Ovary (tissue), 10 donors: ENCODE measurements at regions of chr5 and their contacts with region 1.

Region 1: GRCh38 chr5:16934123-16934522 is 2.0 kb downstream of the MYO10 start:
- DNase-seq: peak; percentile 63 to 81 (median 74)
- H3K4me3 ChIP-seq: peak overlapping the region; percentile 56
- H3K27ac ChIP-seq: no peak overlapping the region
- H3K4me1 ChIP-seq: peaks cover 14% of the 10 kb centered on the region
- H3K27me3 ChIP-seq: no peaks in the 10 kb centered on the region
- CTCF ChIP-seq: peak; percentile 38 to 75 (median 57)
- EP300 ChIP-seq: no peak
- POLR2A ChIP-seq: no peak

Region 2: DNA sequence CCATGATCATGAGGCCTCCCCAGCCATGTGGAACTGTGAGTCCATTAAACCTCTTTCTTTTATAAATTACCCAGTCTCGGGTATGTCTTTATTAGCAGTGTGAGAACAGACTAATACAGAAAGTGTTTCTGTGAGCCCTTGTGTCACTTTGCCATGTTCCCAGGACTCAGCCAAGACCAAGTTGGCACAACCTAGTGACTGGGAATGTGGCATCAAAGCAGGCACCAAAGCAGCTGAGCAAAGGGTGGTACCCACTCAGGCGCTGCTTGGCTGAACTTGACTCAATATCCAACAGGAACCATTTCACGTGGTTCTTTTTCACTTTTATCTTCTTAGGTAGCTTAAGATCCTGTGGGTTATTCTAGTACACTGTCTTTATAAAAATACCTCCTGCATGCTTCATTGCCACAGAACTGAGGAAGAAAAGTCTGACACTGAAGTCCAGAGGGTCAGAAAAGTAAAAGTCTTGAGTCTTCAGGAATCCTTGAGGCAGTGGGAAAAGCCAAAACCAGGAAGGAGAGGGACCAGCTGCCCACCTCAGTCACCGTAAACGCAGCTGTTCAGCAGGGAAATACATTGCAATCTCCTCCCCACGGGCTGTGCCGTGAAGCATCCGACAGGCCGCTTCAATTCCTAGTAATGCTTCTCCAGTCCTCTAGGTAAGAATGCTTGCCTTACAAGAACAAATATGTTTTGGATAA is 226.8 kb before region 1 on chr5:
- intact Hi-C with region 1: no loop called
- DNase-seq: no peak
- H3K4me3 ChIP-seq: no peak overlapping the region
- H3K27ac ChIP-seq: no peak overlapping the region
- H3K4me1 ChIP-seq: no peaks in the 10 kb centered on the region
- H3K27me3 ChIP-seq: no peaks in the 10 kb centered on the region
- CTCF ChIP-seq: no peak
- EP300 ChIP-seq: no peak
- POLR2A ChIP-seq: no peak

Region 3: DNA sequence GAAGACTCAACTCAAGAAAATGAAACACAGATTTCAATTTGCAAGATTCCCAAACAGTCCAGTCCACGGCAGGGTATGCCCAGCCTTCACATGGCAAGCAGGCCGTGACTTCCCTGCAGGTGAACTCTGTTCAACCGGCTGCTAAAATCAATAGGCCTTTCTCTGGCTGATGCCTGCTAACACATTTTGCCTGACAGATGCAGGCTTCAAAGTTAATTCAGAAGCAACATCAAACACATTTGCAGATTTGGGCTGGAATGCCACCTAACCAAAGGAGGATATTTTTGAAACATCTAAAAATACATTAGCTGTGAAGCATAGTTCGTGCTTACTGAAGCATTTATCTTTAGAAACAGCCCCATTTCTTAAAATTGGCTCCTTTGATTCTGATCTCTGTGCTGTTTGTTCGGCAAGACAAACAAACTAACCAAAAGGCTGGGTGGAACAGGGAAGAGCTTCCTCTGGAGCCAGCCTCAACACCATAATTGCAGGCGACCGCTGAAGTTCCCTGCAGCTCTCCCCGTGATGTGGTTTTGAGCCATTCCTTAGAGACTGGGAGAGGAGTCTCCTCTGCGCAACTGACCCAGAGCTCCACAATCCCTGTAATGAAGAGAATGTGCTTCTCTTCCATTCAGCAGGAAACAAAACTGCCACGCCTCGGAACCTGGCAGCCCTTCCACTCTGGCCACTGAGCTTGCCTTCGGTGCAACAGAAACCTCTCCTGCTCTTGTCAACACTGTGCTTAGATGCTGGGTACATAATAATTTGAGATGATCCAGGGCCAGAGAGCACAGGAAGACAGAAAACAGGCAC is 124.5 kb before region 1 on chr5:
- intact Hi-C with region 1: loop called in 1 of 4 experiments (anchors 10 kb)
- DNase-seq: peak in 4 of 5 donors; percentile 45 to 69 (median 60)
- H3K4me3 ChIP-seq: no peak overlapping the region
- H3K27ac ChIP-seq: peak overlapping the region in 1 of 2 donors; percentile 17
- H3K4me1 ChIP-seq: peaks cover 20% of the 10 kb centered on the region
- H3K27me3 ChIP-seq: no peaks in the 10 kb centered on the region
- CTCF ChIP-seq: no peak
- EP300 ChIP-seq: no peak
- POLR2A ChIP-seq: no peak

Region 4: GRCh38 chr5:16992006-16992405 is 57.9 kb after region 1 on chr5:
- intact Hi-C with region 1: no loop called
- DNase-seq: no peak
- H3K4me3 ChIP-seq: no peak overlapping the region
- H3K27ac ChIP-seq: no peak overlapping the region
- H3K4me1 ChIP-seq: no peaks in the 10 kb centered on the region
- H3K27me3 ChIP-seq: no peaks in the 10 kb centered on the region
- CTCF ChIP-seq: no peak
- EP300 ChIP-seq: no peak
- POLR2A ChIP-seq: no peak